ENCODE measurements at regions of chrX and their contacts with region 1.

Region 1: GRCh38 chrX:87975365-87975764 is 457.8 kb downstream of the KLHL4 start:
- DNase-seq: no peak
- H3K4me3 ChIP-seq: no peak overlapping the region
- H3K4me3 Mint-ChIP-seq: no peak overlapping the region
- H3K27ac Mint-ChIP-seq: no peak overlapping the region
- H3K4me1 ChIP-seq: peaks cover 12% of the 10 kb centered on the region; the same call in 1 of the 2 replicates
- H3K4me1 Mint-ChIP-seq: peaks cover 5% of the 10 kb centered on the region
- H3K27me3 ChIP-seq: no peaks in the 10 kb centered on the region
- H3K27me3 Mint-ChIP-seq: no peaks in the 10 kb centered on the region
- CTCF ChIP-seq: no peak

Region 2: GRCh38 chrX:87961471-87961870 is 13.9 kb before region 1 on chrX:
- CTCF ChIA-PET with region 1: no interaction called
- POLR2A ChIA-PET with region 1: no interaction called
- intact Hi-C with region 1: no loop called
- DNase-seq: no peak
- H3K4me3 ChIP-seq: no peak overlapping the region
- H3K4me3 Mint-ChIP-seq: no peak overlapping the region
- H3K27ac Mint-ChIP-seq: no peak overlapping the region
- H3K4me1 ChIP-seq: peaks cover 10% of the 10 kb centered on the region
- H3K4me1 Mint-ChIP-seq: no peaks in the 10 kb centered on the region
- H3K27me3 ChIP-seq: no peaks in the 10 kb centered on the region
- H3K27me3 Mint-ChIP-seq: no peaks in the 10 kb centered on the region
- CTCF ChIP-seq: no peak

Region 3: GRCh38 chrX:88024022-88024421 is 48.7 kb after region 1 on chrX:
- CTCF ChIA-PET with region 1: no interaction called
- POLR2A ChIA-PET with region 1: no interaction called
- intact Hi-C with region 1: no loop called
- DNase-seq: no peak
- H3K4me3 ChIP-seq: no peak overlapping the region
- H3K4me3 Mint-ChIP-seq: no peak overlapping the region
- H3K27ac Mint-ChIP-seq: no peak overlapping the region
- H3K4me1 ChIP-seq: no peaks in the 10 kb centered on the region
- H3K4me1 Mint-ChIP-seq: no peaks in the 10 kb centered on the region
- H3K27me3 ChIP-seq: no peaks in the 10 kb centered on the region
- H3K27me3 Mint-ChIP-seq: no peaks in the 10 kb centered on the region
- CTCF ChIP-seq: no peak

Region 4: GRCh38 chrX:88072339-88073030 is 97.1 kb after region 1 on chrX:
- CTCF ChIA-PET with region 1: no interaction called
- POLR2A ChIA-PET with region 1: no interaction called
- intact Hi-C with region 1: loop called (anchors 5 kb)
- DNase-seq: no peak
- H3K4me3 ChIP-seq: no peak overlapping the region
- H3K4me3 Mint-ChIP-seq: no peak overlapping the region
- H3K27ac Mint-ChIP-seq: no peak overlapping the region
- H3K4me1 ChIP-seq: no peaks in the 10 kb centered on the region
- H3K4me1 Mint-ChIP-seq: no peaks in the 10 kb centered on the region
- H3K27me3 ChIP-seq: no peaks in the 10 kb centered on the region
- H3K27me3 Mint-ChIP-seq: no peaks in the 10 kb centered on the region
- CTCF ChIP-seq: no peak

Region 5: DNA sequence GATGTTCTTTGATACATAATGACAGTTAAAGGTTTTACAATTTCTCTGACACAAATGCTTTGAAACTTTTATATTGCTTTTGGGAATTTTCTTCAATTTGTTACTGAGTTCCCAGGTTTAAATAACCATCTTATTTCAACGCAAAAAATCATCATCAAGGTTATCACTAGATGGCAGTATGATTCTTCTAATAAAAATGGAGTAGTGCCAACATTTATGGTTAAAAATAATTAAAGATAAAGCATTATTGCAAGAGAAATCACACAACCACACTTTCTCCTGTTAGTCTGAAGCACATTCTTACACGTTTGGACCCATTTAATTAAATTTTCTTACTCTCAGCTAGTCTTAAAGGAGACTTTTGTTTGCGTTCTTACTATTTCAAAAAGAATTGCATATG is 160.4 kb after region 1 on chrX:
- CTCF ChIA-PET with region 1: no interaction called
- POLR2A ChIA-PET with region 1: no interaction called
- intact Hi-C with region 1: loop called (anchors 10 kb)
- DNase-seq: peak in 1 of 2 experiments; percentile 1
- H3K4me3 ChIP-seq: no peak overlapping the region
- H3K4me3 Mint-ChIP-seq: no peak overlapping the region
- H3K27ac Mint-ChIP-seq: no peak overlapping the region
- H3K4me1 ChIP-seq: no peaks in the 10 kb centered on the region
- H3K4me1 Mint-ChIP-seq: no peaks in the 10 kb centered on the region
- H3K27me3 ChIP-seq: no peaks in the 10 kb centered on the region
- H3K27me3 Mint-ChIP-seq: no peaks in the 10 kb centered on the region
- CTCF ChIP-seq: peak in 1 of 2 experiments; percentile 15

Region 6: DNA sequence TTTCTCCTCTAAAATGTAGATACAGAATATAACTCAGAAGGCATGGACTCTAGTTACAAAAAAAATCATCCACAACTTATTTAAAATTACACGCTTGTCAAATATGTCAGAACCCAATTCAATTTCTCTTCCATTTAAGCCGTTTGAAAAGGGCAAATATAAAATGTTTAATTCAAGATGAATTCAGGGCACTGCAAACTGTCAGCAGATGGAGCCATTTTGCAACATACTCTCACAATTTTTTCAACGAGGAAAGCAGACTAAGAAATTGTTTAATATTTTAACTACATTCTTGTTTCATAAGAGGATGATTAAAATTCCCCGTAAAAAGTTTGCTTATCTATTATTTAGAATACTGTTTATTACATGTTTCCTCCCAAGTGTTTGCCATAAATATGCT is 450.4 kb after region 1 on chrX:
- CTCF ChIA-PET with region 1: no interaction called
- POLR2A ChIA-PET with region 1: no interaction called
- intact Hi-C with region 1: loop called (anchors 1 kb)
- DNase-seq: peak in 1 of 2 experiments; percentile 9
- H3K4me3 ChIP-seq: no peak overlapping the region
- H3K4me3 Mint-ChIP-seq: no peak overlapping the region
- H3K27ac Mint-ChIP-seq: no peak overlapping the region
- H3K4me1 ChIP-seq: no peaks in the 10 kb centered on the region
- H3K4me1 Mint-ChIP-seq: no peaks in the 10 kb centered on the region
- H3K27me3 ChIP-seq: no peaks in the 10 kb centered on the region
- H3K27me3 Mint-ChIP-seq: no peaks in the 10 kb centered on the region
- CTCF ChIP-seq: peak in 1 of 2 experiments; percentile 28

Region 7: GRCh38 chrX:88560673-88561330 is 585.4 kb after region 1 on chrX:
- CTCF ChIA-PET with region 1: no interaction called
- POLR2A ChIA-PET with region 1: no interaction called
- intact Hi-C with region 1: loop called (anchors 2 kb)
- DNase-seq: peak; percentile 49 to 56
- H3K4me3 ChIP-seq: no peak overlapping the region
- H3K4me3 Mint-ChIP-seq: peak overlapping the region; percentile 61
- H3K27ac Mint-ChIP-seq: peak overlapping the region; percentile 83
- H3K4me1 ChIP-seq: peaks cover 16% of the 10 kb centered on the region
- H3K4me1 Mint-ChIP-seq: peaks cover 5% of the 10 kb centered on the region
- H3K27me3 ChIP-seq: no peaks in the 10 kb centered on the region
- H3K27me3 Mint-ChIP-seq: no peaks in the 10 kb centered on the region
- CTCF ChIP-seq: no peak

Region 8: DNA sequence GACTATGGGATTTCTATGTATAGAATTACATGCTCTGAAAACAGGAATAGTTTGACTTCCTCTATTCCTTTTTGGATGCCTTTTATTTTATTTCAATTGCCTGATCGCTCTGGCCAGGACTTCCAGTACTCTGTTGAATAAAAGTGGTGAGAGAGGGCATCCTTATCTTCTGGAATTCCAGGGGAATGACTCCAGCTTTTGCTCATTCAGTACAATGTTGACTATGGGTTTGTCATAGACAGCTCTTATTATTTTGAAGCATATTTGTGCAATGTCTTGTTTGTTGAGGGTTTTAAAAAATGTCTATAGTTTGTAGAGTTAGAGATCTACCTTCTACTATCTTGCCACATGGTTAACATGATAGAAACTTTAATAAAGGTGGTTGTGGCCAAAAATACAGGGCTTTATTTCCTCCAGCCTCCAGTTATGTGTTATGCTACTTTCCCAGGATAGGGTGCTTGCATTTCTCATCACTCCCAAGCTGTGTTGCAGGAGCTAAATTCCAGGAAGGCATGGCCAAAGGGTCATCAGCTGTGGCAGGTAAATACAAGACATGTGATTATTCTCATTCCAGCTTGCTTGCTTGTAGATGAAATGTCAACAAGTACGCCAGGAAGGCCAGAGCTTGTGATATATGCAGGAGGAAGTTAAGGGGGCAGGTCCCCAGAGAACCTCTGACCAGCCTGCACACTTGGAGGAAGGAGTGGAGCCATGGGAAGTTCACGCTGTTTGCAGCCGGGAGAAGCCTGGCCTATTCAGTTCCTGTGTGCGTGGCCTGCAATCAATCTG is 629.3 kb after region 1 on chrX:
- CTCF ChIA-PET with region 1: no interaction called
- POLR2A ChIA-PET with region 1: no interaction called
- intact Hi-C with region 1: loop called (anchors 1 kb)
- DNase-seq: peak; percentile 70 to 84
- H3K4me3 ChIP-seq: no peak overlapping the region
- H3K4me3 Mint-ChIP-seq: peak overlapping the region; percentile 69
- H3K27ac Mint-ChIP-seq: peak overlapping the region; percentile 79
- H3K4me1 ChIP-seq: peaks cover 31% of the 10 kb centered on the region
- H3K4me1 Mint-ChIP-seq: no peaks in the 10 kb centered on the region
- H3K27me3 ChIP-seq: no peaks in the 10 kb centered on the region
- H3K27me3 Mint-ChIP-seq: no peaks in the 10 kb centered on the region
- CTCF ChIP-seq: no peak

Measured in Caco-2 (cell line).